GM10248 (cell line): ENCODE measurements at regions of chr2 and their contacts with region 1.

Region 1: GRCh38 chr2:8525582-8526402 is 156.1 kb upstream of the ID2 start:
- DNase-seq: peak; percentile 83
- CTCF ChIP-seq: peak; percentile 68

Region 2: GRCh38 chr2:8539743-8540551 is 14.2 kb after region 1 on chr2:
- CTCF ChIA-PET with region 1: interaction called, 17 read pairs
- POLR2A ChIA-PET with region 1: no interaction called
- DNase-seq: no peak
- CTCF ChIP-seq: no peak

Region 3: GRCh38 chr2:8544786-8545694 is 19.2 kb after region 1 on chr2:
- CTCF ChIA-PET with region 1: interaction called, 17 read pairs
- POLR2A ChIA-PET with region 1: no interaction called
- DNase-seq: peak; percentile 84
- CTCF ChIP-seq: peak; percentile 53

Region 4: GRCh38 chr2:8761529-8762164 is 235.9 kb after region 1 on chr2:
- CTCF ChIA-PET with region 1: no interaction called
- POLR2A ChIA-PET with region 1: no interaction called
- DNase-seq: peak; percentile 45
- CTCF ChIP-seq: peak; percentile 44